Brain microvascular endothelial cell (primary cell): ENCODE measurements at regions of chr4 and their contacts with region 1.

Region 1: GRCh38 chr4:74531963-74532794 is 87.2 kb downstream of the AREG start:
- DNase-seq: peak; percentile 78
- H3K4me3 ChIP-seq: no peak overlapping the region
- H3K27ac ChIP-seq: no peak overlapping the region
- H3K27me3 ChIP-seq: no peaks in the 10 kb centered on the region
- CTCF ChIP-seq: peak; percentile 81

Region 2: DNA sequence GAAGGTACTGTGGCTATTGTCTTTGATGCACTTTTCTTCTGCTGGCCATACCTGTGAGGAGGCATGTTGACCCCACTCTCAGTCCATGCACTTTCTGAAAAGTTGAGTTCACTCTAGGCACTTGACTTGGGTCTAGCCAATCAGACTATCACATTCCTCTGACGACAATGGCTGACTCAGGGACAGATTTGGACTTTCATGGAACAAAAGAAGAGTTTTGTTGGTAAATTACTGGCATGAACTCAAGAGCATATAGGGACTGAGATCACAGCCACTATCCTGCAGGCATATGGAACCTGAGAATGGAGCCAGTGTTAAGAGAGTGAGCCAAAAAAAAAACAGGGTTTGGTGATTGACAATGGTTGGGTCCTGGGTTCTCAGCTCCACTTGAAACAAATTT is 720.3 kb before region 1 on chr4:
- in situ Hi-C with region 1: no loop called
- DNase-seq: no peak
- H3K4me3 ChIP-seq: no peak overlapping the region
- H3K27ac ChIP-seq: no peak overlapping the region
- H3K27me3 ChIP-seq: no peaks in the 10 kb centered on the region
- CTCF ChIP-seq: no peak

Region 3: DNA sequence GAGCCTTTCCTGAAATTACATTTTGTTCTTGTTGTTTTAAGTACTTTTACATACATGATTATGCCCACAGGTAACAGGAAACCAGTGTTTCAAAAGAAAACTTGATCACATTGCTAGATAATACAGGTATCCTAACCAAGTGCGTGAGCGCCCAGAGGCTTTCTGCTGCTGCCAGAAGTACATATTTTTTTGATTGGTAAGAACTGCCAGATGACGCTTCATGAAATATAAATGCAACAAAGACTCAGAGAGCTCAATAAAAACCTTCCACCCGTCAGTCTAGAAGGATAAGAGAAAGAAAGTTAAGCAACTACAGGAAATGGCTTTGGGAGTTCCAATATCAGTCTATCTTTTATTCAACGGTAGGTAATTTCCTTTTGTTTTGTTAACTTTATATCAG is 224.0 kb before region 1 on chr4 and contains the start of gene EPGN:
- in situ Hi-C with region 1: no loop called
- DNase-seq: no peak
- H3K4me3 ChIP-seq: no peak within 1 kb of the TSS
- H3K27ac ChIP-seq: no peak within 1 kb of the TSS
- H3K27me3 ChIP-seq: no peaks in the 10 kb centered on the region
- CTCF ChIP-seq: no peak

Region 4: DNA sequence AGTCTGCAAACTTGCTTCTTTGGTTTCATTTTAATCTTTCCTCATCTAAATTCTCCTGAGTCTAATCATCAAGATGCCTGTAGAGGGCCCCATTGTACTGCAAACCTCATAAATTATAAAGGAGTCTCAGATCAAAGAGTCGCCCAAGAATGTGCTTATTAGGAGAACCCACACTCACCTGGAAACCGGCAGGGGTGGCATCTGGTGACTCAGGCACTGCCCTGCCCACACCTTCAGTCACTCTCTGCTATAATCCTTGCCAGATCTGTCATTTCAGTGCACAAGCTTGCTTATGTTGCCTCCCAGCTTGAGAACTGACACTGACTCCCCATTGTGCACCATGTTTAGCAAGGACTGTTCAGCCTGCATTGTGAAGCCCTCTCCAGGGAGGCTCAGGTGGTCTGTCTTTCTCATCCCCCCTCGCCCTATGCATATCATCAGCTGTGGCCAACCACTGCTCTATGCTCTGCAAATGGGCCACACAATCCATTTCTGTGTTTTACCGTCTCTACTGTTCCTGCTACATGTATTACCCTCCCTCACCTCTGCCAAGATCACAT is 211.5 kb before region 1 on chr4:
- in situ Hi-C with region 1: no loop called
- DNase-seq: peak; percentile 55
- H3K4me3 ChIP-seq: no peak overlapping the region
- H3K27ac ChIP-seq: no peak overlapping the region
- H3K27me3 ChIP-seq: no peaks in the 10 kb centered on the region
- CTCF ChIP-seq: peak; percentile 59

Region 5: DNA sequence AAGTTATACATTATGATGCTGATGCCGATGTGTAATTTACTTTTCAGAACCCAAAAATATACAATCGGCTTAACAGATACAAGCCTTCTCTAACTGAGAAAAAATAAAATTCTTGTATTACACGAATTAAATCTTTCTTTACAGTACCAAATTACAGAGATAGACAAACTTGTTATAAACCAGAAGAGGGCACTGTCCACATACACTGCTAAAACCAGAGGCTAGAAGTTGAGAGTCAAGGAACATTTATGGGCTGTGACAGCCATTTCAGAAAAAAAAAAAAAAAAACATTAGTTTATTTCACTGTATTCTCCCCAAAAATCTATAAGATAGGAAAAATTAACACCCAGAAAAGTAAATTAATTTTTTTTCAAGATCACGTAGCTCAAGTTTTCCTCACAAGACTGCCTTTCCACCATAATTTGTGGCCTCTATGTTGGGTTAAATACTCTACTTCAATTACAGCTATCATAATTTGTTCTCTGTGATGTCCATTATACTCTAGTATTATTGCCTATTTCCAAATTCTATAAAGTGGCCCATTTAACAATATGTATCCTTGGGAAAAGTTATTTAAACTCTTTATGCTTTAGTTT is 155.2 kb before region 1 on chr4:
- in situ Hi-C with region 1: loop called (anchors 25 kb)
- DNase-seq: peak; percentile 46
- H3K4me3 ChIP-seq: no peak overlapping the region
- H3K27ac ChIP-seq: no peak overlapping the region
- H3K27me3 ChIP-seq: no peaks in the 10 kb centered on the region
- CTCF ChIP-seq: peak; percentile 49

Region 6: DNA sequence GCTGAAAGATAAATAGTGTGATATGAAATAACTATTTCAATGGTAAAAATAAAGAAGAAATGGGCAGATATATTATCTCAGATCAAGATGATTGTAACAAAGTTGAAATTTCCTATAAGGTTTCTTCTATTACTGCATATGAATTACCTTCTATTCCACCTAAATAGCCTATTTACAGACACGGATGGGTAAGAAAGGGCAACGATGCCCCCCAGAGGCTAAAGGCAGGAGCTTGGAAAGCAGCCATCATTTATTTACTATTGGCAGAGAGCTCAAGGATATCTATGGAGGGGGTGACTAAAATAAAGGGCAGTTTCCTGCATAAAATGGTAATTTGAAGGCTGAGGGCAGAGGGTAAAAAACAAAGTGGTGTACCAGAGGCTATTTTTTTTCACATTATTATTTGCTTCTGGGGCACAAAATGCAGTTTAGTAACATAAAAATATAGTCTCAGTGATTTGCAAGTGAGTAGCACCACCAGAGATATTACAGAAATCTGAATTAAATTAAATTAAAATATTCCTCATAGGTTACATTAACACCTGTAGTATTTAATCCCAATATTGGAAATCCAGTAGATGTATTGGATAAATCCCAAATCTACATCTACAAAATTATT is 139.0 kb after region 1 on chr4:
- in situ Hi-C with region 1: loop called (anchors 25 kb)
- DNase-seq: peak; percentile 76
- H3K4me3 ChIP-seq: no peak overlapping the region
- H3K27ac ChIP-seq: no peak overlapping the region
- H3K27me3 ChIP-seq: no peaks in the 10 kb centered on the region
- CTCF ChIP-seq: peak; percentile 85

Region 7: GRCh38 chr4:74805601-74806000 is 273.4 kb after region 1 on chr4:
- in situ Hi-C with region 1: no loop called
- DNase-seq: peak; percentile 77
- H3K4me3 ChIP-seq: no peak overlapping the region
- H3K27ac ChIP-seq: no peak overlapping the region
- H3K27me3 ChIP-seq: no peaks in the 10 kb centered on the region
- CTCF ChIP-seq: no peak